Posterior cingulate gyrus (tissue), 11 donors: ENCODE measurements at regions of chr1 and their contacts with region 1.

Region 1: DNA sequence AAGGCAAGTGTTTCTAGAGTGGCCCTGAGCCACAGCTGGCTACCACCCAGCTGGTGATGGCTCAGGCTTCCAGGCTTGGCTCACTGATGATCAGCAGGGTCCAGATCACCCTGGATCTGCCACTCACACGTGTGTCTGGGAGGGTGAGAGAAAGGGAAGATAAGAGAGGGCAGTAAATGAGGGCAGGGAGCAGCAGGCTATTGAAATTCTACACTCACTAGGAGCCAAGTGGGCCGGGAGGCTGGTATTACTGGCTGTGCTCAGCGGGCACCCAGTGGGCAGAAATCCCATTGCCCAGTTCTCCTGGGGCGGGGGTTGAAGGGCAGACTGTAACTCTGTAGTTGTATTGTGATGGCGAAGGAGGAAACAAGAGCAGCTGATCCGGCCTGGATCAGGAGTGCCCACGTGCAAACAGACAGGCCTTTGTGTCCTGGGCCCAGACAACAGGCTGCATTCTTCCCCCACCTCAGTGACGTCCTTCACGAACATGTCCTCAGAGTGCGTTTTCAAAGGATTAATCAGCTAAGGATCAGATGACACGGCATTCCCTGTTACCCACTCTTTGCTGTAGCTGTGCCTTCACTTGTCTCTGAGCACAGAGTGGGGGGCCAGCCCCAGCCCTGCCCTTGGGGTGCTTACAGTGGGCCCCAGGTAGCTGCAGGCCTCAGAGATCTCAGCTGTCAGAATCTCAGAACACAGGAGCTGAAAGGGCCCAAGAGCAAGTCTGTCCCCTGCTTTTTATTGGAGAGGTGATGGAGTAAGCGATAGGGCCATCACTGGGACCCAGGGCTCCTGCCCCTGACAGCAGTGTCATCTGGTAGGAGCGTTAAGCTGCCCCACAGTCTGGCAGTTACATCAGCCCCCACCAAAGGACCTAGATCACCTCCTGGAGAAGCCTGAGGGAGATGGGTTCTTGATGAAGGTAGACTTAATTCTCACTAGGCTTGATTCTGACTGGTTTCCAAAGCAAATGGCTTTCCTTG is 60.5 kb downstream of the ATP1A1 start:
- DNase-seq: peak; percentile 81 to 98 (median 88)

Region 2: DNA sequence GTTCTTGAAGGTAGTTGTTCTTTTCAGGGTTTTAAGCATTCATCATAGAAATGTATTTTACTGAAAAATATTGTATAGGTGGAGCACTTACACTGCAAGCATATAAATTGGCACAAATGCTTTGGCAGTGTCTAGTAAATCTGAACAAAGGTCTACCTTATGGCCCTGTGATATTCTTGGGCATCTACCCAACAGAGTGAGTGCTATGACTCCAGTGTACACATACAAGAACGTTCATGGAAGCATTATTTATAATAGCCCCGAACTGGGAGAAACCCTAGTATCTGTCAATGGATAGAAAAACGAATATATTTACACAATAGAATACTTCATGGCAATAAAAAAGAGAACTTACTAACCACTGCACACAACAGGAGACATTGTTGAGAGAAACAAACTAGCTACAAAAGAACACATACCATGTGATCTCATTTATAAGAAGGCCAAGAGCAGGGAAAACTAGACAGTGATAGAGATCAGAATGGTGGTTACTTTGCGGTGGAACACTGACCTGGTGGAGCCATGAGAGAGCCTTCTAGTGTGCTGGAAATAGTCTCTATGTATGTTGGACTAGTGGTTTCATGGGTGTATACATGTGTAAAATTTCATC is 226.3 kb before region 1 on chr1:
- intact Hi-C with region 1: no loop called
- DNase-seq: no peak

Region 3: DNA sequence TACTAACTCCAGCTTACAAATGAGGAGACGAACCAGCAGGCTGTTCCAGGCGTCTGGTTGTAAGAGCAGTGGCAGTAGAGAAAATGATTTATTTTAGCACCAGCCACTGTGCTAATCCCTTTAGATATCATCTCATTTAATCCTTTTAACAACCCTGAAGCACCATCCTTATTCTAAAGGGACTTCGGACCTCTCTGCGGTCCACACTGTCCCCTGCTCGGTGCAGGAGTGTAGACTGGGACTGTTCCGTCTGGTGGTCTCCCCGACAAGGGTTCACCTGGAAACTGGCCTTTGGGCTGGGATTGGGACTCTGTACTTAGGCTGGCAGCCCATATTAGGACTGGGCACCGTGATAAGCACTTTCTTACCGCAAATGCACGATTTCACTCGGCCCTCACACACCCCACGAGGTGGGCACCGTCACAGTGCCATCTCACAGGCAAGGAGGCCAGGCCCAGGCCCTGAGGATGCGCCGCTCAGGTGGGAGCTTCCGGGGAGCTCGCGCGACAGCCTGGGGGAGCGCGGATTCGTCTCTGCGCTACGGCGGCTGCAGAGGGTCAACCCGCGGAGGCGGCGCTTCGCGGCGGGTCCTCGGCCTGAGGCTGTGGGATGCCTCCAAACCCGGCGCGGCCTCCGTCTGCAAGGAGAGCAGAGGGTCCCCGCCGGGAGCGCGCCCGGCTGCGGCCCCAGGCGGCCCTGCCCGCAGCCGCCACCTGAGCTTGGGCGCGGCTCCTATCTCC is 15.3 kb before region 1 on chr1:
- intact Hi-C with region 1: loop called (anchors 2 kb)
- DNase-seq: peak; percentile 72 to 97 (median 80)

Region 4: DNA sequence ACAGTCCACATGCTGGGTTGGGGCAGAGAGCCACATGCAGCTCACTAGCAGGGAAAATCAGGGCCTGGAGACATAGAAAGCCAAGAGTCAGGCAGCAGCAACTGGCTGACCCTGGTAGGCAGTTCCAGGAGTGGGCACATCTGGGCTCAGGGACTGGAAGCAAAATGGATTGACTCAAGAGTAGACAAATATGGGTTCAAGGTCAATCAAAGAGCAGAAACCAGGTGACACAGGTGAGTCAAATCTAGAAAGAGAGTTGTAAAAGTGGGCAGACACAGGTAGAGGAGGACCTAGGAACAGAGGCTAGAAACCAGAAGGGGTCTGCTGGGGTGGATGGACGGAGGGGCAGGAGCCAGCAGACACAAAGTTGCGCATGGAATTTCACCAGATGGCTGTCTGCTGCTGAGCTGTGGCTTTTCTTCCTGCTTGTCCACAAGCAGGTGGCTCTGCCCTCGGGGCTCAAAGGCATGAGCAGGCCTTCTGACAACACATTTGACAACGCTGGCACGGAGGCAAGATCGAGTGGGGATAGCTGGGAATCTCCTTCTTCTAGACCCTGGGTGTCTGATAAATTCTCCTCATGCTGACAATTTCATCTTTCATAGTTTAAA is 274.8 kb after region 1 on chr1:
- intact Hi-C with region 1: no loop called
- DNase-seq: peak in 1 of 10 donors; percentile 60